Psoas muscle (tissue), 8 donors: ENCODE measurements at regions of chr2 and their contacts with region 1.

Region 1: DNA sequence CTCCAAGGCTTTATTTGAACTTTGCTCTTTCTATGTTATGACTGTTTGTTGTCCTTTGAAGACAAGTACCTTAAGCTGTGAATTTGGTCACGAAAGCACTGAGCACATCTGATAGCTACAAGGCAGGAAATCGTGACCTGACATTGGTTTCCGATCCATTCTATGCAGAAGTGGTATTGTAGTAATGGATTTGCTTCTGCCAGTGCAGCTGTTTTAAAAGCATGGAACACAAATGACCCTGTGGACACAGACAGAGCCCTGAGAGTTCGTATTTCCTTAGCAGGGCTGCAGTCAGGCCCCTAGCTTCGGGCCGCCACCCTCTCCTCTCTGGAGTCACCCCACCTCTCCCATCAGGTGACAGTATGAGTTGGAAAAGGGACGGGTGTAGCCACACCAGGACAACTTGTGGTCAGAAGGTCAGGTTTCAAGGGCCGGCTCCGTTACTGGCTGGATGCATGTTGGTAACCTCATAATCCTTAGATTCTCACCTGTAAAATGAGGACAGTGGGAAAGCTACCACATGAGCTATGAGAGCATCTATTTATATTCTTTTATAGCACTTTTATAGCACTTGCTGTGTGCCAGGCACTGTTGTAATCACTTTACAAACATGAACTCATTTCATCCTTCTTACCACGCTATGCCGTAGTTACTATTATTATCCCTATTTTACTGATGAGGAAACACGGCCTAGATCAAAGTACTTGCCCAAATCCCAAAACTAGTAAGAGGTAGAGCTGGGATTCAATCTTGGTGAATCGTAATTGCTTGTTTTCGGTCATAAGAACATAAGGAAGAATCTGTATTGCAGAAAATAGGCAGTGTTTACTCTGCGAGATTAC is 70.2 kb downstream of the SPATS2L start:
- DNase-seq: peak; percentile 58 to 84
- ATAC-seq: peak; percentile 95 to 97 (median 96)
- H3K4me3 ChIP-seq: peak overlapping the region; percentile 23
- H3K27ac ChIP-seq: peak overlapping the region; percentile 83
- H3K4me1 ChIP-seq: peaks cover 46% of the 10 kb centered on the region
- H3K27me3 ChIP-seq: no peaks in the 10 kb centered on the region
- CTCF ChIP-seq: no peak

Region 2: GRCh38 chr2:200274116-200275075 is 102.3 kb before region 1 on chr2:
- intact Hi-C with region 1: no loop called
- DNase-seq: no peak
- ATAC-seq: no peak
- H3K4me3 ChIP-seq: no peak overlapping the region
- H3K27ac ChIP-seq: no peak overlapping the region
- H3K4me1 ChIP-seq: peaks cover 12% of the 10 kb centered on the region
- H3K27me3 ChIP-seq: no peaks in the 10 kb centered on the region
- CTCF ChIP-seq: no peak

Region 3: GRCh38 chr2:200319548-200320337 is 57.0 kb before region 1 on chr2:
- intact Hi-C with region 1: loop called (anchors 5 kb)
- DNase-seq: no peak
- ATAC-seq: peak; percentile 52 to 70 (median 64)
- H3K4me3 ChIP-seq: no peak overlapping the region
- H3K27ac ChIP-seq: peak overlapping the region; percentile 48
- H3K4me1 ChIP-seq: peaks cover 79% of the 10 kb centered on the region
- H3K27me3 ChIP-seq: no peaks in the 10 kb centered on the region
- CTCF ChIP-seq: no peak